ENCODE measurements at regions of chr16 and their contacts with region 1.

Region 1: DNA sequence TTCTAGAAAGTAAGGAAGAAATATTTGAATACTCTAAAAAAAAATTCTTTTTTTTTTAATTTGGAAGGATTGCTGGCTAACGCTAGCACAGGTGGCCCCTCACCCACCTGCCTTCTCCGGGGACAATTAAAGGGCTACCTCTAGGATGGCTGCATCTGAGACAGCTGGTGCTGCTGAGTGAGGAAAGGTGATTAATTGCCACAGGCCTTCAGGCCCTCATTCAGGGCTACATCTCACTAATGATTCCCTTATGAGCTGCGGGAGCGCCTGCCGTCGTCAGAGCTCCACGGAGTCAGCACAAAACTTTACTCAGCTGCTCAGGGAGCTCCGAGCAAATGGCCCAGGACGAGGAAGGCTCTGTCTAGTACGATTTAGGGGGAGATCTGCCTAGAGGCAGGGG is 27.0 kb upstream of the AKTIP start:
- DNase-seq: no peak
- H3K4me3 Mint-ChIP-seq: no peak overlapping the region
- H3K27ac Mint-ChIP-seq: no peak overlapping the region
- H3K4me1 Mint-ChIP-seq: peaks cover 10% of the 10 kb centered on the region
- H3K27me3 Mint-ChIP-seq: no peaks in the 10 kb centered on the region

Region 2: DNA sequence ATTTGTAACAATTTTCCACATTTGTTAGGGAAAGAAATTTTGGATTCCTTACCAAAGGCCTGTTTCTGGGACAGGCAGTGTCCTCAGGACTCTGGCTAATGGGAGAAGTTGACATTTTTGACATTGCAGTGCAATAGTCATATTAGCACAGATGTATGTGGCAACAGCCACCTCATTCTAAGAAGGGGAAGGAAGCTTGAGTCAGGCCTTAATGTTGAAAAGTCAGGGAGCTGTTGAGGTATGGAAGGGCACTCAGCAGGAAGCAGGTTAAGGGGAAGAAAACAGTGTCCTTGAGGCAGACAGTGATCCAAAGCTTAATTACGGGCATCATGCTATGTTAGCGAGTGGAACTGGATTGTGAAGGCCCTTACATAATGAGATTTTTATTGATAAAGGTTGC is 47.9 kb before region 1 on chr16:
- CTCF ChIA-PET with region 1: no interaction called
- POLR2A ChIA-PET with region 1: no interaction called
- intact Hi-C with region 1: no loop called
- DNase-seq: no peak
- H3K4me3 Mint-ChIP-seq: no peak overlapping the region
- H3K27ac Mint-ChIP-seq: peak overlapping the region; percentile 67
- H3K4me1 Mint-ChIP-seq: peaks cover 23% of the 10 kb centered on the region
- H3K27me3 Mint-ChIP-seq: no peaks in the 10 kb centered on the region

Region 3: GRCh38 chr16:53518550-53519416 is 11.3 kb before region 1 on chr16:
- CTCF ChIA-PET with region 1: interaction called, 3 read pairs
- POLR2A ChIA-PET with region 1: interaction called, 15 read pairs
- intact Hi-C with region 1: loop called (anchors 1 kb)
- DNase-seq: peak; percentile 92
- H3K4me3 Mint-ChIP-seq: peak overlapping the region; percentile 73
- H3K27ac Mint-ChIP-seq: peak overlapping the region; percentile 84
- H3K4me1 Mint-ChIP-seq: peaks cover 46% of the 10 kb centered on the region
- H3K27me3 Mint-ChIP-seq: no peaks in the 10 kb centered on the region

Measured in activated CD4-positive, alpha-beta memory T cell treated with anti-CD3 and anti-CD28 coated beads for 36 hours (primary cell).